ENCODE measurements at regions of chr1 and their contacts with region 1.

Region 1: GRCh38 chr1:47437447-47438164 is at the start of gene FOXD2:
- DNase-seq: peak; percentile 86
- H3K4me3 ChIP-seq: peak within 1 kb of the TSS; percentile 67 to 91 (median 71)
- H3K27ac ChIP-seq: peak within 1 kb of the TSS; percentile 56
- H3K4me1 ChIP-seq: peaks cover 35% of the 10 kb centered on the region
- H3K27me3 ChIP-seq: peaks cover 19% of the 10 kb centered on the region
- CTCF ChIP-seq: peak; percentile 39 to 75
- total RNA-seq, gene FOXD2: 0.50 to 1.1 TPM

Region 2: DNA sequence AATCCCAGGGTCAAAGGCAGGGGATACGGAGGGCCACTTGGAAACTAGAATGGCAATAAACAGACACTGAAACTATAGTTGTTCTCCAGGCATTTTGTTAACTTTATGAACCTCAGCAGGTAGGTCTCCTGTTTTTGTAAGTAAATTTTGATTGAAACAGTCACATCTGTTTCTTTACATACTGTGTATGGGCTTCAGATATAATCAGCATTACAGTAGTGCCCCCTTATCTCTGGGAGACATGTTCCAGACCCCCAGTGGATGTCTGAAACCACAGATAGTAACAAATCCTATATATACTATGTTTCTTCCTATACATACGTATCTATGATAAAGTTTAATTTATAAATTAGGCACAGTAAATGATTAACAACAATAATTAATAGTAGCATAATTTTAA is 135.1 kb before region 1 on chr1:
- CTCF ChIA-PET with region 1: no interaction called
- dilution Hi-C with region 1: no loop called
- in situ Hi-C with region 1: no loop called
- intact Hi-C with region 1: no loop called
- DNase-seq: no peak
- H3K4me3 ChIP-seq: no peak overlapping the region
- H3K27ac ChIP-seq: no peak overlapping the region
- H3K4me1 ChIP-seq: no peaks in the 10 kb centered on the region
- H3K27me3 ChIP-seq: no peaks in the 10 kb centered on the region
- CTCF ChIP-seq: no peak

Region 3: DNA sequence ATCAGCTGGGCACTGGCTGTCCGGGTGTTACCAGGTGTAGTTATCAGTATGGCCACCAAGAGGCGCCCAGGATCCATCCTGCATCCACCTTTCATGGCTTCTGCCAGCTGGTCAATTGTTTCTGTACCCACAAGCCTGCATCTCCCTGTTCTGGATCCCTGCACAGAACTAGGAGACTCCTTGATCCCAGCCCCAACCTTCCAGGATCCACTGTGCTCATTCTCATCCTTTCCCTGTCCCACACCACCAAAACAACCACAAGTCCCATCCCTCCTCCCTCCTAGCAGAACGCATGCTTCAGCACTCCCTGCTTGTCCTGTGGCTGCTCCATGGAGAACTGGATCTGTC is 48.7 kb before region 1 on chr1:
- CTCF ChIA-PET with region 1: interaction called, 5 read pairs
- dilution Hi-C with region 1: no loop called
- in situ Hi-C with region 1: no loop called
- intact Hi-C with region 1: loop called (anchors 1 kb)
- DNase-seq: peak; percentile 56
- H3K4me3 ChIP-seq: no peak overlapping the region
- H3K27ac ChIP-seq: no peak overlapping the region
- H3K4me1 ChIP-seq: no peaks in the 10 kb centered on the region
- H3K27me3 ChIP-seq: no peaks in the 10 kb centered on the region
- CTCF ChIP-seq: peak; percentile 87 to 89

Region 4: DNA sequence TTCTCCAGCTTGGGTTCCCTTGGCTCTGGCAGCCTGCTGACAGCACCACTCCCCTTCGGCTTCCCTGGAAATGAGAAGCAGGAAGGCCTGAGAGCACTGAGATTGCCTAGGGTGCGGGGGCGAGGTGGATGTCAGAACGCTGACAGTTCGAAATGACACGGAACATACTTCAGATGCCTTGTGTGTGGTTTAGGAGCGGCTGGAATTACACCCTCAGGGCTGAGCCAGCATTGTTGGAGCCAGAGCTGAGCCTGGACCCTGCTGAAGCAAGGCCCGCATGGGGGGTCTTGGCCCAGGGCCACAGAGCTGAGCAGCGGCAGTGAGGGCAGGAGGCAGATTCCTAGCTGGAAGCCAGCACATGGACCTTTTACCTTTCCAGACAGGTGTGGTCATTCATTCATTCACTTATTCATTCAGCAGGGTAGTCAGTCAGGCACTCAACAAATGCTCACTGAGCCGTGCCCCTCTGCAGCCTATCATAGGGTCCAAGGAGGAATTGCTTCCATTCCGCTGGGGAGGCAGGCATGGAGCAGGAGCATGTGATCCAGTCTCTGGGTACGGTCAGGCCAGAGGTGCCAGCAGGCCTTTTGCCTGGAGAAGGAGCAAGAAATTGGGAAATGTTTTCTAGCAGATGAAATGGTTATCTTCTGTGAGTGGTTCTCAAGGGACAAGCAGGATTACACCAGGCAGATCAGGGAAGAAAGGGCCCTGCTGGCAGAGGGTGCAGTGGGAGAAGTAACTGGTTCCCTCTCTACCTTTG is 28.1 kb before region 1 on chr1:
- CTCF ChIA-PET with region 1: no interaction called
- dilution Hi-C with region 1: no loop called
- in situ Hi-C with region 1: no loop called
- intact Hi-C with region 1: no loop called
- DNase-seq: peak; percentile 78
- H3K4me3 ChIP-seq: no peak overlapping the region
- H3K27ac ChIP-seq: peak overlapping the region; percentile 40
- H3K4me1 ChIP-seq: peaks cover 46% of the 10 kb centered on the region
- H3K27me3 ChIP-seq: no peaks in the 10 kb centered on the region
- CTCF ChIP-seq: no peak

Region 5: GRCh38 chr1:47561523-47562007 is 124.0 kb after region 1 on chr1:
- CTCF ChIA-PET with region 1: no interaction called
- dilution Hi-C with region 1: no loop called
- in situ Hi-C with region 1: no loop called
- intact Hi-C with region 1: loop called (anchors 2 kb)
- DNase-seq: peak; percentile 86
- H3K4me3 ChIP-seq: no peak overlapping the region
- H3K27ac ChIP-seq: peak overlapping the region; percentile 5
- H3K4me1 ChIP-seq: peaks cover 25% of the 10 kb centered on the region
- H3K27me3 ChIP-seq: no peaks in the 10 kb centered on the region
- CTCF ChIP-seq: no peak

Region 6: DNA sequence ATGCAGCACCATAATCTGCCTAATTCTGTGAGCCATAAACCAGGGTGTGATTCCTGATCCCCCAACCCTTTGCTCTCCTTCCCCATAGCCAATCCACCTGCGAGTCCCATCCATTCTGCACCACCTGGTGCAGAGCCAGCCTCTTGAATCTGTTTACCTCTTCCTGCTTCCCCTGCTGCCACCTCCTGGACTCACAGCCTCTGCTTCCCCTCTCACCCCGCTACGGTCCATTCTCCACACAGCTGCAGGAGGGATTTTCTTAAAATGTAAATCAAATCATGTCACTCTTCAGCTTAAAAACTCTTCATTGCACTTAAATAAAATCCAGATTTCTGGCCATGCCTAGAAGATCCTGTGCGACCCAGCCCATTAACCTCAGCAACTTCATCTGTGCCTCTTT is 186.9 kb after region 1 on chr1:
- CTCF ChIA-PET with region 1: no interaction called
- dilution Hi-C with region 1: no loop called
- in situ Hi-C with region 1: no loop called
- intact Hi-C with region 1: loop called (anchors 1 kb)
- DNase-seq: peak; percentile 10
- H3K4me3 ChIP-seq: no peak overlapping the region
- H3K27ac ChIP-seq: no peak overlapping the region
- H3K4me1 ChIP-seq: no peaks in the 10 kb centered on the region
- H3K27me3 ChIP-seq: no peaks in the 10 kb centered on the region
- CTCF ChIP-seq: peak; percentile 39 to 72

Region 7: GRCh38 chr1:47725992-47726855 is 288.6 kb after region 1 on chr1:
- CTCF ChIA-PET with region 1: interaction called, 15 read pairs
- dilution Hi-C with region 1: no loop called
- in situ Hi-C with region 1: no loop called
- intact Hi-C with region 1: loop called (anchors 1 kb)
- DNase-seq: peak; percentile 58
- H3K4me3 ChIP-seq: peak overlapping the region in 1 of 3 experiments; percentile 8
- H3K27ac ChIP-seq: no peak overlapping the region
- H3K4me1 ChIP-seq: peaks cover 20% of the 10 kb centered on the region
- H3K27me3 ChIP-seq: no peaks in the 10 kb centered on the region
- CTCF ChIP-seq: peak; percentile 94

Region 8: GRCh38 chr1:47934243-47934805 is 496.7 kb after region 1 on chr1:
- CTCF ChIA-PET with region 1: interaction called, 4 read pairs
- dilution Hi-C with region 1: no loop called
- in situ Hi-C with region 1: no loop called
- intact Hi-C with region 1: loop called (anchors 1 kb)
- DNase-seq: no peak
- H3K4me3 ChIP-seq: no peak overlapping the region
- H3K27ac ChIP-seq: no peak overlapping the region
- H3K4me1 ChIP-seq: peaks cover 4% of the 10 kb centered on the region
- H3K27me3 ChIP-seq: no peaks in the 10 kb centered on the region
- CTCF ChIP-seq: no peak

Measured in mammary epithelial cell (primary cell).